Transverse colon (tissue), 4 donors: ENCODE measurements at regions of chr1 and their contacts with region 1.

Region 1: DNA sequence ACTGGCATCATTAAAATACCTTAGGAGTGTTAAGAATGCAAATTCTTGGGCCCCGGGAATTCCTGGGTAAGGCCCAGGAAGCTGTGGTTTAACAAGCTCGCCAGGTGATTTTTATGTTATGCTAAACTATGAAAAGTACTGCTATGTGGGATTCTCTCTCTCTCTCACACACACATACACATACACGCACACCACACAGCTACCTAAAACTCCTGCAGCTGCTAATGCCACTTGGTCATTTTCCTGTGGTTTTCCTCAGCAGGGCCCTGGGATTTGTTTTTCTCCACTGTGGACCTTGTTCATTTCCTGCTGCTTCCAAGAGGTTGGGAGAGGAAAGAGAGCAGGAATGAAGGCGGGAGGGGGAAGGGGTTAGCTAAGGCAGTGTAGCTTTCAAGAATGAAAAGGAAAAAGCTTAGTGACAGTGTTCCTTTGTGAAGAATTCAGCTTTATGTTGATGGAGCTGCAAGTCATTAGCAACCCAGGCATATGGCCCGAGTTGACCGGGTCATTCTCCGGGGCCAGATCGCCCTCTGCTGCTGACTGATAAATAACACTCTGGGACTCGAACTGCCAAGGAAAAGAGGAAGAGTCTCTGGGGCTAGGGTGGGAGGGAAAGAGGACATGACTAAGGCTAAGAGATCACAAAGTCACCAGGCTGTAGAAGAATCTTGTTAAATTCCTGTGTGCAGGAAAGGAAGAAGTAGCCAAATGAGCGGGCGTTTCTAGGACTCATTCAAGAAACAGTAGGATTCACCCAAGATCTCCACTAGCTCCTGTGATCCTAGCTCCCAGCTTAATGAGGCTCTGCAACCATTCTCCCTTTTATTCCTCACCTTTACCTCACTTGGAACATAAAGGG is 30.5 kb upstream of the LRIG2 start:
- DNase-seq: peak; percentile 78
- H3K4me3 ChIP-seq: no peak overlapping the region
- H3K27ac ChIP-seq: peak overlapping the region; percentile 69 to 80 (median 74)
- H3K4me1 ChIP-seq: peaks cover 4 to 33% (median 23%) of the 10 kb centered on the region in 4 donors
- H3K27me3 ChIP-seq: no peaks in the 10 kb centered on the region
- CTCF ChIP-seq: peak; percentile 51 to 71 (median 54)
- EP300 ChIP-seq: no peak
- POLR2A ChIP-seq: no peak

Region 2: GRCh38 chr1:112744009-112744578 is 298.4 kb before region 1 on chr1:
- in situ Hi-C with region 1: loop called in 1 of 4 experiments (anchors 25 kb)
- intact Hi-C with region 1: no loop called
- DNase-seq: peak; percentile 13
- H3K4me3 ChIP-seq: peak overlapping the region in 2 of 4 donors; percentile 18 to 35
- H3K27ac ChIP-seq: no peak overlapping the region
- H3K4me1 ChIP-seq: peaks cover 0 to 12% (median 10%) of the 10 kb centered on the region in 4 donors
- H3K27me3 ChIP-seq: peaks cover 74% of the 10 kb centered on the region
- CTCF ChIP-seq: peak in 2 of 5 experiments; percentile 30 to 33
- EP300 ChIP-seq: no peak
- POLR2A ChIP-seq: no peak

Region 3: DNA sequence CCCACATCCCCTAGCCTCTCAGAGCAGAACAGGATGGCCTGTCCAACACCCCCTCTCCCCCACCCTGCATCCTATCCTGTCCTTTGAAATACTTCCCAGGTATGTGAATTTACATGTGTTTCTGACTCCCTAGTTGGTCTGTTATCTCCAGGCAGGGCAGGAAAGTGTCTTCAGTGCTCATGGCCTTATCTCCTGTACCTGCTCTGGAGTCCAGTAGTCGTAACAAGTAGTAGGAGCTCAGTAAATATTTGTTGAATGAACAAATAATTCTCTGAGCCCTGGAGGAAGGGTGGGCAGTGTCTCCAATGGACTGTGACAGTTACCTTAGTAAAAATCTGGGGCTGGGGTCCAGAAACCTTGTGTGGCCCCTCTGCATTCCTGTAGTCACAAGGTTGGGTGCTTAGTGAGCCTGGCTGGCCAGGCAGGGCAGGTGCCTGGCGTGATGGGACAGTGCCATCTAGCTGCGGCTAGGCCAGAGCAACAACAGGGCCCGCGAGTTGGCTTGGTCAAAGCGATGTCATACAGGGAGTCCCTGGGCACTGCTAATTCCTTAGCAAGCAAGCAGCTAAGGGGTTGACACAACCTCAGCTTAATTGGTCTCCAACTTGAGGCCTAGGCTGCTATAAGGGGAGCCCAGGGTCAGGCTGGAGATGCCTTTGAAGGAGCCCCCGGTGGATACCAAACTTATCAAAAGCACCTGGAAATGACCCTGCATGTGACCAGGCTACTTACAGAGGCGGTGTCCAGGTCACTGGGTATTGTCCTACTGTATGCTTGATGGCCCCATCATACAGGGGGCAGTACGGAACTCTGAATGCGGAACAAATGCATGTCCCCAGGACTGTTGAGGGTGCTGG is 238.4 kb before region 1 on chr1:
- in situ Hi-C with region 1: loop called in 1 of 4 experiments (anchors 10 kb)
- intact Hi-C with region 1: no loop called
- DNase-seq: peak; percentile 79
- H3K4me3 ChIP-seq: no peak overlapping the region
- H3K27ac ChIP-seq: no peak overlapping the region
- H3K4me1 ChIP-seq: peaks cover 0 to 2% (median 0%) of the 10 kb centered on the region in 4 donors
- H3K27me3 ChIP-seq: no peaks in the 10 kb centered on the region
- CTCF ChIP-seq: peak; percentile 49 to 78 (median 67)
- EP300 ChIP-seq: no peak
- POLR2A ChIP-seq: no peak

Region 4: DNA sequence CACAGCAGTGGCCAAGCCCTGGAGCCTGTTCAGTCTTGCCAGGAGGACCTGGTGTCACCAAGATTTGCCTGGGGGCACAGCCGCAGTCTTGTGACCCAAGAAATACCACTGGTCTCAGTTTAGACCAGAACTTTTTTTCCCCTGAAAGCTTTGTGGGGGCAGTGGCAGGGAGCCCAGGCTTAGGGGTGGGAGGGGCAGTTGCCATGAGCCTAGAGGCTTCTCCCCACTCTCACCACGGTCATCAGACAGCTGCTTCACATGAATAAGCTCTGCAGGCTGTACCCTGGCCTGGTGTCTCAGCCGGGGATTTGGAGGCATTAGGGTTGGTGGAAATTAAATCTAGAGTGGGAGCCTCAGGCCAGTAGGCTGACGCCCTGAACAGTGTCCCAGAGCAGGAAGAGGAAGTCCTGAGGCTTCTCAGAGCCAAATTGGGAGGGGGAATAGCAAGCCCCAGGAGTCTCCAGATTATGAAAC is 160.2 kb before region 1 on chr1:
- in situ Hi-C with region 1: loop called in 3 of 4 experiments (anchors 5 to 10 kb)
- intact Hi-C with region 1: loop called (anchors 1 kb)
- DNase-seq: no peak
- H3K4me3 ChIP-seq: no peak overlapping the region
- H3K27ac ChIP-seq: peak overlapping the region; percentile 49 to 70 (median 60)
- H3K4me1 ChIP-seq: peaks cover 11 to 35% (median 20%) of the 10 kb centered on the region in 4 donors
- H3K27me3 ChIP-seq: no peaks in the 10 kb centered on the region
- CTCF ChIP-seq: no peak
- EP300 ChIP-seq: no peak
- POLR2A ChIP-seq: no peak

Region 5: GRCh38 chr1:112985123-112985522 is 57.4 kb before region 1 on chr1:
- in situ Hi-C with region 1: no loop called
- intact Hi-C with region 1: no loop called
- DNase-seq: no peak
- H3K4me3 ChIP-seq: no peak overlapping the region
- H3K27ac ChIP-seq: no peak overlapping the region
- H3K4me1 ChIP-seq: peaks cover 0 to 18% (median 3%) of the 10 kb centered on the region in 4 donors
- H3K27me3 ChIP-seq: no peaks in the 10 kb centered on the region
- CTCF ChIP-seq: no peak
- EP300 ChIP-seq: no peak
- POLR2A ChIP-seq: no peak